ENCODE measurements at regions of chr18 and their contacts with region 1.

Region 1: DNA sequence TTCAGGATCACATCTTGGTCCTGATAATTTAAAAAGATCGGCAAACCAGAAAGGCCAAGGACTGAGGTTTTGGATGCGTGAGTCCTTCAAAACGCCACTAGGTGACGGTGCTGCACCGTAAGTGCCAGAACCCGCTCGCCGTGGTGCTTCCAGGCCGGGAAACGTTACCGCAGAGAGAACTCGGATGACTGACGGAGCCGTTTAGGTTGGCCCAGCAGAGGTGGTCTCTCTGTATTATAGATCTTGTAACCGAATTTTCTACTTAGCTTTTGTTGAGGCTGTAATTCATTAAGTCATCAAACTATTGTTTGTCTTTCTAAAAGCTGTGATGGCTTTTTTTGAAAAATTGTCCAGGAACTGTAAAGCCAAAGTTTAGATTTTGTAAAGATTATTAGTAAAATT is 39.8 kb upstream of the ADCYAP1 start:
- DNase-seq: peak; percentile 81
- H3K4me3 ChIP-seq: no peak overlapping the region
- H3K27ac ChIP-seq: no peak overlapping the region
- H3K4me1 ChIP-seq: no peaks in the 10 kb centered on the region
- H3K27me3 ChIP-seq: peaks cover 80% of the 10 kb centered on the region
- CTCF ChIP-seq: peak; percentile 96

Region 2: GRCh38 chr18:903701-904100 is 38.8 kb after region 1 on chr18:
- CTCF ChIA-PET with region 1: no interaction called
- POLR2A ChIA-PET with region 1: no interaction called
- intact Hi-C with region 1: loop called (anchors 5 kb)
- DNase-seq: peak; percentile 73
- H3K4me3 ChIP-seq: no peak overlapping the region
- H3K27ac ChIP-seq: no peak overlapping the region
- H3K4me1 ChIP-seq: peaks cover 14% of the 10 kb centered on the region
- H3K27me3 ChIP-seq: peaks cover 98% of the 10 kb centered on the region
- CTCF ChIP-seq: no peak

Region 3: DNA sequence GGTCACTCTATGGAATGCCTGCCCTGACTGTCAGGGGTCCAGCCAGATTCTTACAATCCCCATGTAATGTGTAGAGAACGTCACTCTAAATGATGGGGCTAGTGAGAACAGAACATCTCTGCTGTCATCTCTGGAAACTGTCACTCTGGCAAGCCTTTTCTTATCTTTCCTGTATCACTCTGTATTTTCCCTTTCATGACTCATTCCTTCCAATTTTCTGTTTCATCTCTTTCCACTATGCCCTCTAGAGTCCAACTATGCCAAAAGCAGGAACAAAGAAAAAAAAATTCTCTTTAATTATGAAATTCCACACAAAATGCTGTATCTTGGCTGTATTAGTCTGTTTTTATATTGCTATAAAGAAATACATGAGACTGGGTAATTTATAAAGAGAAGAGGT is 648.6 kb after region 1 on chr18:
- CTCF ChIA-PET with region 1: no interaction called
- POLR2A ChIA-PET with region 1: no interaction called
- intact Hi-C with region 1: loop called (anchors 5 kb)
- DNase-seq: no peak
- H3K4me3 ChIP-seq: no peak overlapping the region
- H3K27ac ChIP-seq: no peak overlapping the region
- H3K4me1 ChIP-seq: no peaks in the 10 kb centered on the region
- H3K27me3 ChIP-seq: no peaks in the 10 kb centered on the region
- CTCF ChIP-seq: peak; percentile 29; the same call in 1 of the 2 replicates

Region 4: DNA sequence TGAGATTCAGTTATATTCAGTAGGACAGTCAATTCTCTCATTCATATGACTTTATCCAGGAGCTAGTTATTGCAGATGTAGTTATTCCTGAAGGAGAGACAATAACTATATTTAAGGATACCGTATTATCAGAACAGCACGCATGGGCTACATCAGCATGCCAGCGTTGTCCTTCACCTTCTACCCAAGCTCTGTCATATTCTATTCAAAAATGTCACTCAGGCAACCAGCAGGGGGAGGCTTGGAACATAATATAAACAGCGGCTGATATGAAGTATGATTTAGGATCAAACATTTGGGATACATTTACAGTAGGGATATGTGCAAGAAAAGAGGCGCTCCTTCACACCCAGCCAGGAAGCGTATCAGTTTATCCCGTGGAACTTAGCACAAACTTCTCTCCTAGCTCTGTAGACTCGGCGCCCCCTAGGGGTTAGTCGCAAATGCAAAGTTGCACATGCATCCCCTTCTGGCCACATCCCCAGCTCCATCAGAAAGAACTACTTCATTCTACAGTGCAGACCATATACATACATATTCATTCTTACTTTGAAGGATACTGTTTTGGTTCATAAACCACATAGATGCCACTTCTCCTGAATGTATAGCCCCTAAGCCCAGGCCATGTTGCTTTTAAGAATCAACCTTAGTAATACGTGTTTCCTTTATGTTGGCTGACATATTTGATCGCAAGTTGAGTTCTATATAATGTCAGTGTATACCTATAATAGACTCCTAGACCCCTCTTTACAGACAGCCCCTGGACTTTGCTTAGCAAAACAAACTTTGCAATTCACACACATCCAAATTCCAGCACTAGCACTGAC is 799.2 kb after region 1 on chr18:
- CTCF ChIA-PET with region 1: no interaction called
- POLR2A ChIA-PET with region 1: no interaction called
- intact Hi-C with region 1: loop called (anchors 10 kb)
- DNase-seq: peak; percentile 75
- H3K4me3 ChIP-seq: no peak overlapping the region
- H3K27ac ChIP-seq: no peak overlapping the region
- H3K4me1 ChIP-seq: no peaks in the 10 kb centered on the region
- H3K27me3 ChIP-seq: peaks cover 10% of the 10 kb centered on the region
- CTCF ChIP-seq: peak; percentile 92

Measured in A673 (cell line).